Gastrocnemius medialis (tissue), 4 donors: ENCODE measurements at regions of chr15 and their contacts with region 1.

Region 1: GRCh38 chr15:73964736-73965093 is 27.4 kb downstream of the STOML1 start:
- DNase-seq: peak; percentile 37 to 67
- ATAC-seq: peak; percentile 65 to 95
- H3K4me3 ChIP-seq: no peak overlapping the region
- H3K27ac ChIP-seq: no peak overlapping the region
- H3K4me1 ChIP-seq: no peaks in the 10 kb centered on the region
- H3K27me3 ChIP-seq: peaks cover 0 to 5% (median 0%) of the 10 kb centered on the region in 3 donors
- CTCF ChIP-seq: peak; percentile 75 to 95 (median 89)
- POLR2A ChIP-seq: no peak

Region 2: GRCh38 chr15:72994534-72995177 is 970.1 kb before region 1 on chr15:
- in situ Hi-C with region 1: no loop called
- intact Hi-C with region 1: no loop called
- DNase-seq: no peak
- ATAC-seq: no peak
- H3K4me3 ChIP-seq: no peak overlapping the region
- H3K27ac ChIP-seq: no peak overlapping the region
- H3K4me1 ChIP-seq: peaks cover 10 to 23% of the 10 kb centered on the region in 2 donors
- H3K27me3 ChIP-seq: no peaks in the 10 kb centered on the region
- CTCF ChIP-seq: no peak
- POLR2A ChIP-seq: no peak

Region 3: DNA sequence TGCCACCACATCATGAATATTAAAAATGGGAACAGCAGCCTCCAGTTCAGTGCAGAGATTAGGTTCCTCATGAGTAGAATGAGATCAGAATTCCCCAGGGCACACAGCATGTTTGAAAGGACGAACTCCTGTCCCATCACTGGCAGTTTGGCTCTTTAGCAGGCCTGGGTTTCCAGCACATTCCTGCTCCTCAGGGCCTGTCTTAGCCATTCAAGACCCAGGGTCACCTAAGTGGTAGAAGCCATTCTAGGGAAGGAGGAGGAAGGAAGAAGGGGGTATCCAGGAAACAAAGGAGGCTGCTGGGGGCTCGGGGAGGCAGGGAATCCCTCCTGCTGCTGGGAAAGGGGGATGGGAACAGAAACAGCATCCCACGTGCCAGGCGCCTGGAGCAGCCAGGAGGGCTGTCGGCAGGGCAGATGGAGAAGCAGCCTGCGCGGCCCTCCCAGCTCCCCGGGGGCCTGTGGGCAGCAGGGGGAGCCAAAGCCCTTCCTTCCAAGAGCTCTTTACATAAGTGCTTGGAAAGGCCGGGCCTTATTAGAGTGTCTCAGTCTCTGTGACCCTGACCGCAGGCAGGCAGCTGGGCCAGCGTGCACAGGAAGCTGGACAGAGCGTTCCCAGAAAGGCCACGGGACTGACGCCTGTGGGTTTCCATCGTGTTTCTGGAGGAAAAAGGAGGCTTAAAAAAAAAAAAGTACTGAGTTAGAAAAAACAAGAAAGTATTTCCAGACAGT is 13.7 kb before region 1 on chr15:
- in situ Hi-C with region 1: no loop called
- intact Hi-C with region 1: loop called (anchors 1 kb)
- DNase-seq: peak; percentile 86 to 89
- ATAC-seq: peak; percentile 94 to 98
- H3K4me3 ChIP-seq: no peak overlapping the region
- H3K27ac ChIP-seq: peak overlapping the region; percentile 79 to 86 (median 86)
- H3K4me1 ChIP-seq: peaks cover 10 to 15% of the 10 kb centered on the region in 2 donors
- H3K27me3 ChIP-seq: no peaks in the 10 kb centered on the region
- CTCF ChIP-seq: peak; percentile 62 to 83 (median 75)
- POLR2A ChIP-seq: no peak